Psoas muscle (tissue), 8 donors: ENCODE measurements at regions of chr3 and their contacts with region 1.

Region 1: DNA sequence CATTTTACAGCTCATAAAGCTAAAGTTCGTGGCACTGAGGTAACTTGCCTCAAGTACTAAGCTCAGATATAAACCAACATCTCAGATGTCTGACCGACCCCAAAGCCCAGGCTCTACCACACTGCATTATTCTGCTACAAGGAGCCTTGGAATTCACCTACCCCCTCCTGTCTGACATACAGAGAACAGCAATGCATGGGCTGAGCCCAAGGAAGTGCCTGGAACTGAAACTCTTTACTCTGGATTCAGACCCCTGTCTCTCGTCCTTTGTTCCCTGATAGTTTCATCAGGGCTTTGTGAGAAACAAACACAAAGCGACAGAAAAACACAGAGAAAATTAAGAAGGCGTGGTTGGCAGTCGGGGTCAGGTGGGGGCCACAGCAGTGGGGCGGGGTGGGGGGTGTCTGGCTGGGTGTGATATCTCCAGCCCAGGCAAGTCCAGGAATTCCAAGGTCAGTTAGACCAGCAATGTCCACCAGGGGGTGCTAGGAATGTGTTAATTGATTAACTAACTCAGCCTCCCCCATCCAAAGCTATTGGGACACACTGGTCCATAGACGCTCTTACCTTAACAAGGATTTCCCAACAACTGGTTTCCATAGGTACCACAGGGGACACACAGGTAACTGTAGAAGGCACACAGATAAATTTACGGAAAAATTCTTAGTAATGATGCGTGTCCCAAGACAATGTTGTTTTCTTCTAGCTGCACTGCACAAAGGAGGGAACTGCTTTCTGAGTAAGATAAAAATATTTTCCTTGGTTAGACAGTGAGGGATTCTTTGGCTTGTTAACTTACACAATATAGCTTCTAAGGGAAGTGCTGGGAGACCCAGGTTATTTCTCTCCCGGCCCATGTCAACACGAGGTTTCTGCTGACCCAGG is 18.8 kb upstream of the SSUH2 start:
- DNase-seq: peak; percentile 32 to 57
- ATAC-seq: peak; percentile 59 to 81 (median 68)
- H3K4me3 ChIP-seq: no peak overlapping the region
- H3K27ac ChIP-seq: no peak overlapping the region
- H3K4me1 ChIP-seq: peaks cover 15% of the 10 kb centered on the region
- H3K27me3 ChIP-seq: no peaks in the 10 kb centered on the region
- CTCF ChIP-seq: peak; percentile 72

Region 2: DNA sequence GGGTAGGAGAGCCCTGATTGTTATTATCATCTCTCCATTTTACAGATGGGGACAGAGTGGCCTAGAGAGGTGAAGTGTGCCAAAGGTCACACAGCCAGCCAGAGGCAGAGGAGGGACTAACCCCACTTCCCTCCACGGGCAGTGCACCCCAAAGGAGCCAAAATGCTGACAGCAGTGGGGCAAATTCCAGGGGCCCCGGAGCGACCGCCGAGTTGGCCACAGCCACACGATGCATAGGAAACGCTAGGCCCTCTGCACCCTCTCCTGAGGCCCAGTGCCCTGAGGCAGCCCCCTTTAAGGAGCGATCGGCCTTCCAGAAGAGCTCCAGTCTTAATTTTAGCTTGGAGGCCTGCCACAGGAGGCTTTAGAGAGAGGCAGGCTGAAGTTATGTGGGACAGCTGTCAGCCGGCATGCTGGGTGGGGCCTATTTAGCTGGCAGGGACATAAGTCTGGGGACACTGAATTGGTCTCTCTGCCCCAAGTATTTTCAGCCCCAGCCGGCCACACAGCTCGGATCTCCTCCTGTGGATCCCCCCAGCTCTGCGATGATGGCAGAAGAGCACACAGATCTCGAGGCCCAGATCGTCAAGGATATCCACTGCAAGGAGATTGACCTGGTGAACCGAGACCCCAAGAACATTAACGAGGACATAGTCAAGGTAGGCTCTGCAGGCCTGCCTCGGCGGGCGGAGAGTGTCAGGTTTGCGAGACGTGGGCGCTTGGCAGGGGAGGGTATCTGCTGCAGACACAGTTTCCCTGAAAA is 70.1 kb after region 1 on chr3 and contains the start of gene CAV3:
- intact Hi-C with region 1: loop called in 1 of 2 experiments (anchors 5 kb)
- DNase-seq: peak; percentile 63 to 88
- ATAC-seq: peak; percentile 81 to 90 (median 87)
- H3K4me3 ChIP-seq: peak within 1 kb of the TSS; percentile 70
- H3K27ac ChIP-seq: peak within 1 kb of the TSS; percentile 98
- H3K4me1 ChIP-seq: peaks cover 31% of the 10 kb centered on the region
- H3K27me3 ChIP-seq: no peaks in the 10 kb centered on the region
- CTCF ChIP-seq: no peak
- total RNA-seq, gene CAV3: 36.4 to 71.1 (median 52.5) TPM

Region 3: DNA sequence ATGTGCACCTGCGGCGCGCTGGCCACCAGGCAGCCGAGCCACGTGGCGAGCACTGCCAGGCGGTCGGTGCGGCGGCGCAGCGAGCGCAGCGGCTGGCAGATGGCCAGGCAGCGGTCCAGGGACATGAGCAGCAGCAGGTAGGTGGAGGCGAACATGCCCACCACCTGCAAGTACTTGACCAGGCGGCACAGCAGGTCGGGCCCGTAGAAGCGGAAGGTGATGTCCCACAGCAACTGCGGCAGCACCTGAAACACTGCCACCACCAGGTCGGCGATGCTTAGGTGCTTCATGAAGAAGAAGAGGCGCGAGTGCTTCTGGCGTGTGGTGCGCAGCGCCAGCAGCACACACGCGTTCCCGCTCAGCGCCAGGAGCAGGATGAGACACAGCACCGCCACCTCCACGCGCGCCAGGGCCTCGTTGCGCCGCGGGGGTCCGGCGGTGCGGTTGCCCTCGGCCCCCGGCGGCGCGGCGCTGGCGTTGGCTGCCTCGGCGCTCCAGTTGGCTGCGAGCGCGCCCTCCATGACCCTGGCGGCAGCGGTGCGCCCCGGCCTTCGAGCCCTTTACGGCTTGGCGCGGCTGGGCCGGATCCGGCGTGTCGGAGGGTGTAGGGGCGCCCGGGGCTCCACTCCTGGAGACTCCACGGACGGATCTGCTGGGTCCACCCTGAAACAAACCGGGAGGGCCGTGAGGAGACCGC is 104.4 kb after region 1 on chr3:
- intact Hi-C with region 1: loop called in 1 of 2 experiments (anchors 2 kb)
- DNase-seq: no peak
- ATAC-seq: peak; percentile 33 to 67 (median 54)
- H3K4me3 ChIP-seq: peak overlapping the region; percentile 65
- H3K27ac ChIP-seq: no peak overlapping the region
- H3K4me1 ChIP-seq: peaks cover 4% of the 10 kb centered on the region
- H3K27me3 ChIP-seq: peaks cover 0 to 24% (median 3%) of the 10 kb centered on the region in 3 donors
- CTCF ChIP-seq: no peak

Region 4: GRCh38 chr3:8882171-8882593 is 218.8 kb after region 1 on chr3:
- intact Hi-C with region 1: no loop called
- DNase-seq: no peak
- ATAC-seq: no peak
- H3K4me3 ChIP-seq: no peak overlapping the region
- H3K27ac ChIP-seq: no peak overlapping the region
- H3K4me1 ChIP-seq: no peaks in the 10 kb centered on the region
- H3K27me3 ChIP-seq: no peaks in the 10 kb centered on the region
- CTCF ChIP-seq: no peak

Region 5: DNA sequence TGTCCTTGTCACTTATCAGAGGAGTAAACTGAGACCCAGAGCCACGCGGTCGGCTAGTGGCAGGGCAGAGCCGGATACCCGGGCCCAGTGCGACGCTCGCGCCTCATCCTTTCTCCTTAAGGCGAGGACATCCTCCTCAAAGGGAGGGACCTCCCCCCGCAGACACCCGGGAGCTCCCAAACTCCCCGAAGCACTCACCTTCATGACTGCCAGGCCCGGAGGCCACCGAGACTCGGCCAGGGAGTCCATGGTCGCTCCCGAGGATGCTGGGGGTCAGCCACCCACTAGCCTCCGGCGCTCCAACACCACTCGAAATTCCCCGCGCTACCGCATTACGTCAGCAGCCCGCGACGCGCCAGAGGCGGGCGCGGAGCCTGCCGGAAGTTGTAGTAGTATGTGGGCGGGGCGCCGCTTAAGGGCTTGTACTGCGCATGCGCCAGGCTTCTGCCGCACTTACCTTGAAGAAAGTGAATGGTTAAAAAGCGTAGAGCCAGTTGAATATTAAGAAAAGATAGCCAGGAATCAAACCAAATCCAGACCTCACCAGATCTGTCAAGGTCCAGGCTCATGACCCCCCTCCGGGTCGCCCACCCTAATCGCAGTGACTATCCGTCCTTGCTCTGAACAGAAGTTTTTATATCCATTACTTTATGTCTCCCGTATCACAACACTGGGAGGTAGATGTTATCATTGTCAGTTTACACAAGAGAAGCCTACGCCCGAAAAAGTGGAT is 299.9 kb after region 1 on chr3 and contains the start of gene RAD18:
- intact Hi-C with region 1: loop called in 1 of 2 experiments (anchors 10 kb)
- DNase-seq: peak; percentile 90 to 96
- ATAC-seq: peak; percentile 97 to 100 (median 98)
- H3K4me3 ChIP-seq: peak within 1 kb of the TSS; percentile 81
- H3K27ac ChIP-seq: peak within 1 kb of the TSS; percentile 85
- H3K4me1 ChIP-seq: peaks cover 11% of the 10 kb centered on the region
- H3K27me3 ChIP-seq: no peaks in the 10 kb centered on the region
- CTCF ChIP-seq: no peak
- total RNA-seq, gene RAD18: 1.3 to 2.3 (median 2.2) TPM

Region 6: GRCh38 chr3:9008550-9009255 is 345.3 kb after region 1 on chr3:
- intact Hi-C with region 1: no loop called
- DNase-seq: no peak
- ATAC-seq: no peak
- H3K4me3 ChIP-seq: no peak overlapping the region
- H3K27ac ChIP-seq: no peak overlapping the region
- H3K4me1 ChIP-seq: no peaks in the 10 kb centered on the region
- H3K27me3 ChIP-seq: no peaks in the 10 kb centered on the region
- CTCF ChIP-seq: no peak